ENCODE measurements at regions of chr14 and their contacts with region 1.

Region 1: DNA sequence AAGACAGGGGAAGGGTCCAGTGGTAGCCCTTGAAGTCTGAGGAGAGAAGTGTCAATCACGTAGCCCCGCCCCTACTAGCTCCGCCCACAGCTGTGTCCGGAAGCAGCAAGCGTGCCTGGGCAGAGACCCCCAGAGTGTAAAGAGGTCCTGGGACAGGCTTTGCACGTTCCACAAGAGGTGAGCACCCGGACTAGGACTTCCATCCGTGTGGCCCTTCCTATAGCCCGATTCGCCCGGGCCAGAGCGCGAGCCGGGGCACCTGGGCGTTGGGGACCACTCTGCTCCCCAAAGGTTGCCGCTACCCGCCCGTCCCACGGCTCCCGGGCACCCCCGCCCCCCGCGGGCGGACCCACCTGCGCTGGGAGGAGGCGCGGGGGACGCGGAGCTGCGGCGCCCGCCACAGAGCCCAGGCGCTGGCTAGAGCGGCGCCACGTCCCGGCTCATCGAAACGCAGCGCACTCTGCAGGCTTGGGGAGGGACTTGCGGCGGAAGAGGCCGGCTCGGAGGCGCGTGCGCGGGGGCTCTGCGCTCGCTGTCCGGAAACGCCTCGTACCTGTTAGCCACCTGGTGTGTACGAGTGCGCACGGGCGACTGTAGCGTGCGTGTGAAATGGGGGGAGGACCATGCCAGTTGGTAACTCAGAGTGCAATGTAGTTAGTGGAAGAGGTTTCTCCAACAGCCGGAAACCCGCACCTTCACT is at the start of gene RABGGTA:
- DNase-seq: peak; percentile 94
- ATAC-seq: peak; percentile 85
- H3K4me3 Mint-ChIP-seq: peak within 1 kb of the TSS; percentile 83
- H3K27ac Mint-ChIP-seq: peak within 1 kb of the TSS; percentile 97
- H3K4me1 Mint-ChIP-seq: peaks cover 46% of the 10 kb centered on the region
- H3K27me3 Mint-ChIP-seq: no peaks in the 10 kb centered on the region
- total RNA-seq, gene RABGGTA: 52.1 to 56.0 TPM

Region 2: DNA sequence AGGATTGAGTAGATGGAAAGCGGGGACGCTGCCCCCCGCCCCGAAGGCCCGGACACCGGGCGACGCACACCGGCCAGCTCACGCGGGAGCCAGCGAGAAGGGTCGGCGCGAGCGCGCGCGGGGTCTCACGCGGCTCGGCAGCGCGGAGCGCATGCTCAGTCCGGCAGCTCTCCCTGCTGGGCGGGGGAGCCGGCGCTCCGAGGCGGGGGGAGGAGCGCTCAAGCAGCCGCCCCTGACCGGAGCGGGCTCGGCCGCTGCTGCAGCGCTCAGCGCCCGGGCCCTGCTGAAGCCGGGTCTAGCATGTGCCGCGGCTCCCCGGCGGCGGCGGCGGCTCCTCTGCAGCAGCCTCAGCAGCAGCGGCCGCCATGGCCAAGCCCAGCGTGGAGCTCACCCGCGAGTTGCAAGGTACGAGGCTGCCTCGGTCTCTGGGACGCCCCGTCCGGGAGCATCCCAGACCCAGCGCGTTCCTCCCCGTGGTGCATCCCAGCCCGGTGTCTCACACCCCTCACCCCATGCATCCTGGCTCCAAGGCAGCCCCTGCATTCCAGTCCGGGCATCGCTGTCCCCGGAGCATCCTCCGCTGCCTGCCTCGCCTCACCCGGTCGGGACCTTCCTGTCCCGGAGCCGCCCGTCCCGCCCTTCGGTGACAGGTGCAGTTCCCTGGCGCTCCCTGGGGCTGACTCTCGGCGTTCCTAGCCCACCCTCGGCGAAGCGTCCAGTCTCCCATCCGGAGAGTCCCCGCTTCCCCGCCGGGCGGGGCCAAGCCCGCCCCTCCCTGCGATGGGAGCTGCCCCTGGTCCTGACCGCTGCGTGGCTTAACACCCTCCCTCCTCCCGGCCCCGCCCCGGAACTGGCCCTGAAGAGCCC is 219.3 kb before region 1 on chr14 and contains the start of gene CARMIL3:
- CTCF ChIA-PET with region 1: no interaction called
- POLR2A ChIA-PET with region 1: no interaction called
- intact Hi-C with region 1: loop called in 1 of 2 experiments (anchors 5 kb)
- DNase-seq: peak; percentile 77
- ATAC-seq: peak; percentile 57
- H3K4me3 Mint-ChIP-seq: peak within 1 kb of the TSS; percentile 57
- H3K27ac Mint-ChIP-seq: peak within 1 kb of the TSS; percentile 67
- H3K4me1 Mint-ChIP-seq: peaks cover 19% of the 10 kb centered on the region
- H3K27me3 Mint-ChIP-seq: peaks cover 8% of the 10 kb centered on the region
- total RNA-seq, gene CARMIL3: 0.74 to 0.91 TPM

Region 3: DNA sequence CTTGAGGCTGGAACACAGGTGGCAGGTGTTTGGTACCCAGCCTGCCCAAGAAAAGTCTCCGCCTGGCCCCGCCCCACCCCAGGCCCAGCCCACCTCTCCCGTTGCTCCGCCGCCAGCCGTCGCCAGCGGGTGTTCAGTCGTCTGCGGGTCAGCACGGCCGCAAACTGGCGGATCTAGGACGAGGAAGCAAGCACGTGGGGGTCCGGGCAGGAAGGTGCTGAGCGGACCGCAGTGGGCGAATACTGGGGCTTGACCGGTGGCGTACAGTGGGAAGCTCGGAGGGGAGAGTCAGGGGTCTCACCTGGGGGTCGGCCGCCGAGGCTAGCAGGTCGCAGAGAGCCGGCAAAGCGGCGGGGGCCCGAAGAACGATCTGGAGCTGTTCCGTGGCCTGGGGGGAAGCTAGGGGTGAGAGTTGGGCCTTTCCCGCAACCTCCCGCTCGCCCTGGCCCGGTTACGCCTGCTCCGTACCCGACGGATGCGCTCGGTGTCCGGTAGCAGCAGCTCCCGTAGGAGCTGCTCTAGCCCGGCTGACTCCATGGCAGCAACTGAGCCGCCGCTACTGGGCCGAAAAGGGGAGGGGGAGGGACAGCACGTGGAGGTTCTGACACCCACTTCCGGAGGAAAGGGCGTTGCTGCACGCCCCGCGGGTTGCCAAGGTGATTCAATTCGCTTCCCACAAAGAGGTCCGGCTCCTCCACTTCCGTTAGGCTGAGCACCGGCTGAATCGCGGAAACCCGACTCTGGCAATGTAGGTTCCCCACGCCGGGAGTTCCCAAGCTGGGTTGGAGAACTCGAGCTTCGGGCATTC is 82.8 kb before region 1 on chr14 and contains the start of gene IPO4:
- CTCF ChIA-PET with region 1: interaction called, 4 read pairs
- POLR2A ChIA-PET with region 1: interaction called, 6 read pairs
- intact Hi-C with region 1: loop called in 1 of 2 experiments (anchors 1 kb)
- DNase-seq: peak; percentile 97
- ATAC-seq: peak; percentile 92
- H3K4me3 Mint-ChIP-seq: peak within 1 kb of the TSS; percentile 89
- H3K27ac Mint-ChIP-seq: peak within 1 kb of the TSS; percentile 83
- H3K4me1 Mint-ChIP-seq: peaks cover 40% of the 10 kb centered on the region
- H3K27me3 Mint-ChIP-seq: no peaks in the 10 kb centered on the region
- total RNA-seq, gene IPO4: 73.4 to 73.7 TPM

Region 4: DNA sequence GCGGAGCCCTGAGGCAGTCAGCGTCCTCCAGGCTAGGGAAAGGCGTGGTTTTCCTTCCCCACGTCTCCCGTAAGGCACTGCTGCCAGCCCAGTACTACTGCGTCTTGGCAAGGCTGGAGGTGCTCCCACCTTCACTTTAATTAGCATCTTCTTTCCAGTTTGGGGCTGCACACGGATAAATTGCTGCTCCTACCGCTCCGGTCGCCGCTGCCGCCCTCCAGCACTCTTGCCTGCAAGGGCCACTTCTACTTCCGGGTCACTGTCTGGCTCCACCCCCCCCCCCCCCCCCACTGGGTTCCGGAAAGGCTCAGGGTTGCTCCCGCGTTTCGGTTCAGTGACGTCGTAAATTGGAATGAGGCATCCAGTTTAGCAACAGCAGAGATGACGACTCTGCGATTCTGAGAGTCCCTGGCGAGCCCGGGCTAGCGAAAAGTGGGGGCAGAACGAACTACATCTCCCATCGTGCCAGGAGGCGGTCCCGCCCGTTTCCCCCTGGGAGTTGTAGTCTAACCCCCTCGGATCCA is 39.1 kb before region 1 on chr14 and contains the start of gene NEDD8:
- CTCF ChIA-PET with region 1: interaction called, 5 read pairs
- POLR2A ChIA-PET with region 1: interaction called, 6 read pairs
- intact Hi-C with region 1: loop called (anchors 1 to 5 kb)
- DNase-seq: peak; percentile 96
- ATAC-seq: peak; percentile 91
- H3K4me3 Mint-ChIP-seq: peak within 1 kb of the TSS; percentile 78
- H3K27ac Mint-ChIP-seq: peak within 1 kb of the TSS; percentile 89
- H3K4me1 Mint-ChIP-seq: peaks cover 58% of the 10 kb centered on the region
- H3K27me3 Mint-ChIP-seq: no peaks in the 10 kb centered on the region
- total RNA-seq, gene NEDD8: 187 to 217 TPM

Region 5: DNA sequence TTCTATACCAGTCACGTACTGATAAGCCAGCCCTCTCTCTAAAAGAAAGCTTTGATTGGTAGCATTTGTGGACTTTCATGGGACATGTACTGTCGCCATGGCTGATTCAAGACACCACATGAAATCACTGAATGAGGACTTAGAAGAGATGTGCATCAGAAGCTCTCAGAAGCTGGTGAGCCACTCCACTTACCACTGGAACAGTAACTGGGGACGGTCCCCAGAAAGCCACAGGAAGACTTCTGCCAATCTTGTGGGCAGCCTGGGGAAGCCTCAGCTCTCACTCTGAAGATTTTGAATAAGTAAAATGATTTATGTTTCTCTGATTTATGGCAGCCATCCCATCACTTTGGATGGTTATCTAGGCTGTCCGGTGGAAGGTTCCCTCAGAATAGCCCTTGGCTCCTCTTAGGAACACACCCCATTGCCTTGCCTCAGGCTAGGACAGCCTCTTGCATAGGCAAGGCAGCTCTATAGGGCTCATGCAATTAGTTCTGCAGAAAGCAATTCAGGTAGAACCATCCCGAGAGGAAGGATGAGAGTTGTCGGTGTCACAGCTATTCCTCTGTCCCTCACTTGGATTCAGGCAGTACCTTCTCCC is 18.5 kb after region 1 on chr14:
- CTCF ChIA-PET with region 1: interaction called, 36 read pairs
- POLR2A ChIA-PET with region 1: interaction called, 5 read pairs
- intact Hi-C with region 1: loop called (anchors 1 kb)
- DNase-seq: peak; percentile 88
- ATAC-seq: peak; percentile 99
- H3K4me3 Mint-ChIP-seq: peak overlapping the region; percentile 21
- H3K27ac Mint-ChIP-seq: peak overlapping the region; percentile 25
- H3K4me1 Mint-ChIP-seq: peaks cover 28% of the 10 kb centered on the region
- H3K27me3 Mint-ChIP-seq: no peaks in the 10 kb centered on the region

Region 6: GRCh38 chr14:24442273-24443052 is 171.2 kb after region 1 on chr14 and contains the start of gene SDR39U1:
- CTCF ChIA-PET with region 1: interaction called, 3 read pairs
- POLR2A ChIA-PET with region 1: no interaction called
- intact Hi-C with region 1: loop called in 1 of 2 experiments (anchors 1 kb)
- DNase-seq: peak; percentile 98
- ATAC-seq: peak; percentile 92
- H3K4me3 Mint-ChIP-seq: peak within 1 kb of the TSS; percentile 97
- H3K27ac Mint-ChIP-seq: peak within 1 kb of the TSS; percentile 99
- H3K4me1 Mint-ChIP-seq: peaks cover 41% of the 10 kb centered on the region
- H3K27me3 Mint-ChIP-seq: no peaks in the 10 kb centered on the region
- total RNA-seq, gene SDR39U1: 40.9 to 47.8 TPM

Region 7: GRCh38 chr14:24595073-24595808 is 324.0 kb after region 1 on chr14:
- CTCF ChIA-PET with region 1: no interaction called
- POLR2A ChIA-PET with region 1: no interaction called
- intact Hi-C with region 1: no loop called
- DNase-seq: no peak
- ATAC-seq: no peak
- H3K4me3 Mint-ChIP-seq: no peak overlapping the region
- H3K27ac Mint-ChIP-seq: no peak overlapping the region
- H3K4me1 Mint-ChIP-seq: peaks cover 5% of the 10 kb centered on the region
- H3K27me3 Mint-ChIP-seq: peaks cover 9% of the 10 kb centered on the region